ENCODE measurements at regions of chr14 and their contacts with region 1.

Region 1: GRCh38 chr14:76956316-76957090 is 72.0 kb downstream of the IRF2BPL start:
- DNase-seq: peak; percentile 92 to 99
- H3K4me3 ChIP-seq: peak overlapping the region; percentile 48; the same call in 1 of the 2 replicates
- H3K27ac ChIP-seq: peak overlapping the region; percentile 90
- H3K4me1 ChIP-seq: peaks cover 98% of the 10 kb centered on the region
- H3K27me3 ChIP-seq: no peaks in the 10 kb centered on the region
- CTCF ChIP-seq: no peak; the same call in 1 of the 2 replicates

Region 2: GRCh38 chr14:76109087-76109880 is 847.2 kb before region 1 on chr14:
- CTCF ChIA-PET with region 1: no interaction called
- POLR2A ChIA-PET with region 1: interaction called, 11 read pairs
- intact Hi-C with region 1: no loop called
- DNase-seq: peak; percentile 68 to 70
- H3K4me3 ChIP-seq: no peak overlapping the region
- H3K27ac ChIP-seq: no peak overlapping the region
- H3K4me1 ChIP-seq: no peaks in the 10 kb centered on the region
- H3K27me3 ChIP-seq: peaks cover 96% of the 10 kb centered on the region
- CTCF ChIP-seq: no peak

Region 3: GRCh38 chr14:76752744-76753143 is 203.8 kb before region 1 on chr14:
- CTCF ChIA-PET with region 1: no interaction called
- POLR2A ChIA-PET with region 1: no interaction called
- intact Hi-C with region 1: no loop called
- DNase-seq: no peak
- H3K4me3 ChIP-seq: no peak overlapping the region
- H3K27ac ChIP-seq: no peak overlapping the region
- H3K4me1 ChIP-seq: no peaks in the 10 kb centered on the region
- H3K27me3 ChIP-seq: peaks cover 74% of the 10 kb centered on the region
- CTCF ChIP-seq: no peak

Region 4: DNA sequence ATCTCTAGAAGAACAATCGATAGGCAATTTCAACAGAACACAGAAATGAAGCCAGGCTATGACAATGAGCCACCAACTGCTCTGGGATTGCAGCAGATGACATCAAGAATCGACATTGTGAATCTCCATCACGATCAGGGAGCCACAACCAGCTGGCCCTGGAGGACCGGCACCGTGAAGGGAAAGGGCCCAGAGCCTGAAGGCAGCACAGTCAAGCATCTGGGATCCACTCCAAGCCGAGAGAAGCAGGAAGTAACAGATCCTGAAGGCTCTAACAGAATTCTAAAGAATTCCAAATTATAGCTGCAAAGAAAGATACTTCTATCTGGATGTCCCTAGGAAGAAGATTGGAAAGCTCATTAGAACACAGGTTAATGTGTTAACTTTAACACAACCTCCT is 69.3 kb before region 1 on chr14:
- CTCF ChIA-PET with region 1: no interaction called
- POLR2A ChIA-PET with region 1: no interaction called
- intact Hi-C with region 1: no loop called
- DNase-seq: no peak
- H3K4me3 ChIP-seq: no peak overlapping the region
- H3K27ac ChIP-seq: no peak overlapping the region
- H3K4me1 ChIP-seq: no peaks in the 10 kb centered on the region
- H3K27me3 ChIP-seq: no peaks in the 10 kb centered on the region
- CTCF ChIP-seq: no peak

Region 5: DNA sequence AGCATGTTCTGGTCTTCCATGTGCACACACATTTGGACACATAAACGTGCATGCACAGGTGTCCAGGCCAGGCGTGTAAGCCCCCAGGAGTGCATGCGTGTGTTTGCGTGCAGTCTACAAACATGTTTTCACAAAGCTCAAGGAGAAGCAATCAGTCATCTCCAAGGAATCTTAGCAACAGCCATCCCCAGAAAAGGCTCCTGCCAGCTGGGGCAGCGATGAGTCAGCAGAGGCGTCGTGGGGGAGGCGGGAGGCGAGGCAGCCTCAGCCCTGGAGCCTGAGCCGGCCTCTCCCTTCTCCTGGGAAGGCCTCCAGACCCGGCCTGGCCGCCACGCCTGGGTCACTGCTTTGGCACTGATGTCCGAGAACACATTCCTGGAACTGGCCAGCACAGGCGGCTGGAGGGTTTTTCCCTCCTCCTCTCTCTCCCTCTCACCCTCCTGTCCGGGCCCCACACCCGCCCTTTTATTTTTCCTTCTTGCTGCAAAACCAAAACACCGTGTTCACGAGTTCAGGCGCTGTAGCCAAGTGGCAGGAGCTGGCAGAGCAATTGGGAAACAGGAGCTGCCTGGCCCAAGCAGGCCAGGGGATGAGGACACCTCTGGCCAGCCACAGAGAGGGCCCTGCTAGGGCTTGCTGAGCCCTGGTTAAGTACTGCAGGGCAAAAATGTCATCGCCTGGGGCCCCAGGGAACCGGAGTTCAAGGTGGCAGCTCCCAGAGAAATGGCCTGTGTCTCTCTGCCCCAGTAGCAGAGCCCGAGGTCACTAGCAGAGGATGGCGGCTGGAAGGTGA is 37.6 kb before region 1 on chr14:
- CTCF ChIA-PET with region 1: interaction called, 27 read pairs
- POLR2A ChIA-PET with region 1: interaction called, 29 read pairs
- intact Hi-C with region 1: loop called (anchors 1 kb)
- DNase-seq: peak; percentile 98 to 100
- H3K4me3 ChIP-seq: peak overlapping the region; percentile 20; the same call in 1 of the 2 replicates
- H3K27ac ChIP-seq: peak overlapping the region; percentile 91
- H3K4me1 ChIP-seq: peaks cover 79% of the 10 kb centered on the region
- H3K27me3 ChIP-seq: no peaks in the 10 kb centered on the region
- CTCF ChIP-seq: peak; percentile 43; the same call in 1 of the 2 replicates

Region 6: DNA sequence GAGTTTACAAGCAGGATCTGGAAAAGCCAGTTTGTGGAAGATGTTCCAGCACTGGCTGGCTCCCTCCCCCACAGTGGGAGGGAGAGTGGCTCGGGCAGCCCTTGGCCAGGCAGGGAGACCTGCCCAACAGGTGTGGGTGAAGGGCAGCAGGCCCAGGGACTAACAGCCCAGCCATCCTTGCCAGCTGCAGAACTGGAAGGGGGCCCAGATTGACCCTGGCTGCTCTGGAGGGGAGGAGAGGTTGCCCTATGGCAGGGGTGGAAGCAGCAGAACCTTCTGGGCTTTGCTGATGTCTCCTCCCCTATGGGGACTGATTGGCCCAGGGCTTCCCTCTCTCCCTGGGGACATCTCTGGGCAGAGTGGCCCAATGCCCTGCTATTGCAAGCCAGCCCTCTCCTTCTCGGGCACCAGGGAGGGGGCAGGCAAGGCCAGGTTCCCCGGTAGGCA is 51.5 kb after region 1 on chr14:
- CTCF ChIA-PET with region 1: interaction called, 6 read pairs
- POLR2A ChIA-PET with region 1: interaction called, 14 read pairs
- intact Hi-C with region 1: loop called (anchors 1 kb)
- DNase-seq: peak; percentile 95 to 99
- H3K4me3 ChIP-seq: peak overlapping the region; percentile 33; the same call in 1 of the 2 replicates
- H3K27ac ChIP-seq: peak overlapping the region; percentile 77
- H3K4me1 ChIP-seq: peaks cover 89% of the 10 kb centered on the region
- H3K27me3 ChIP-seq: no peaks in the 10 kb centered on the region
- CTCF ChIP-seq: no peak

Region 7: GRCh38 chr14:77028384-77029231 is 72.1 kb after region 1 on chr14 and contains the start of gene IRF2BPL:
- CTCF ChIA-PET with region 1: interaction called, 12 read pairs
- POLR2A ChIA-PET with region 1: interaction called, 17 read pairs
- intact Hi-C with region 1: loop called (anchors 1 kb)
- DNase-seq: peak; percentile 97 to 100
- H3K4me3 ChIP-seq: peak within 1 kb of the TSS; percentile 64
- H3K27ac ChIP-seq: peak within 1 kb of the TSS; percentile 88
- H3K4me1 ChIP-seq: peaks cover 54% of the 10 kb centered on the region
- H3K27me3 ChIP-seq: no peaks in the 10 kb centered on the region
- CTCF ChIP-seq: no peak
- total RNA-seq, gene IRF2BPL: 74.6 and 84.5 TPM in 2 replicates

Region 8: DNA sequence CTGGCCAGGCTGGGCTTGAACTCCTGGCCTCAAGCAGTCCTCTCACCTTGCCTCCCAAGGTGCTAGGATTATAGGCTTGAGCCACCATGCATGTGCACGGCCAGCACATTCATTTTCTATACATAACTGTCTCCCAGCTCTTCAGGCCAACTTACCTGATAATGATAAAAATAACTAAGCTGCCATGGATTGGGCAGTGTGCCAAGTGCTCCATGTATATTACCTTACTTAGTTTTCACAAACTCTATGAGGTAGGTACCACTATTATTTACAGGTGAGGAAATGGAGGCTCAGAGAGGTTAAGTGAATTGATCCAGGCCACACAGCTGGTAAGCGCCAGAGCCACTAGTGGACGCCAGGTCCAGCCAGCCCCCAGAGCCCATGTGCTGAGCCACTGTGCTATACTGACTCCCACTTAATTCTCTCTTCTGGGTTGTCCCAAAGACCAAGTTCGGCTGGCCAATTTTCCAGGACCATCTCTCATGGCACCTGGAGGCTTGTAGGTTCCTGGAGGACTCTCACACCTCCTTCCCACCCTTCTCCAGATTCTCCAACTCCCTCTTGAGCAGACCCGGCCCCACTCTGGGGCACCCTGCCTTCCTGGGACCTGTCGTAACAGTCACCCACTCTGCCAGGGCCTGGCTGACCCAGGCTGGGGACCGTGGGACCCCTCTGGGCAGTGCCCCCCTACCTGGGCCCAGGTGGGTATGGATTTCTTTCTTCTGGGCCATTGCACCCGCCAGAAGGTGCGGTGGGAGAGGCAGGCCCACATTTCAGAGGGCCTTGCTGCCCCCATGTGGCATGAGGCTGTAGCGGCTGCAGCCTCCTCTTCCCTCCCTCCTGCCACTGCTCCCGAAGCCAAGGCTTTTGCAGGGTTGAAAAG is 111.4 kb after region 1 on chr14:
- CTCF ChIA-PET with region 1: interaction called, 13 read pairs
- POLR2A ChIA-PET with region 1: interaction called, 6 read pairs
- intact Hi-C with region 1: loop called (anchors 1 kb)
- DNase-seq: peak; percentile 74 to 93
- H3K4me3 ChIP-seq: no peak overlapping the region
- H3K27ac ChIP-seq: no peak overlapping the region
- H3K4me1 ChIP-seq: peaks cover 54% of the 10 kb centered on the region
- H3K27me3 ChIP-seq: no peaks in the 10 kb centered on the region
- CTCF ChIP-seq: peak; percentile 100

Region 9: DNA sequence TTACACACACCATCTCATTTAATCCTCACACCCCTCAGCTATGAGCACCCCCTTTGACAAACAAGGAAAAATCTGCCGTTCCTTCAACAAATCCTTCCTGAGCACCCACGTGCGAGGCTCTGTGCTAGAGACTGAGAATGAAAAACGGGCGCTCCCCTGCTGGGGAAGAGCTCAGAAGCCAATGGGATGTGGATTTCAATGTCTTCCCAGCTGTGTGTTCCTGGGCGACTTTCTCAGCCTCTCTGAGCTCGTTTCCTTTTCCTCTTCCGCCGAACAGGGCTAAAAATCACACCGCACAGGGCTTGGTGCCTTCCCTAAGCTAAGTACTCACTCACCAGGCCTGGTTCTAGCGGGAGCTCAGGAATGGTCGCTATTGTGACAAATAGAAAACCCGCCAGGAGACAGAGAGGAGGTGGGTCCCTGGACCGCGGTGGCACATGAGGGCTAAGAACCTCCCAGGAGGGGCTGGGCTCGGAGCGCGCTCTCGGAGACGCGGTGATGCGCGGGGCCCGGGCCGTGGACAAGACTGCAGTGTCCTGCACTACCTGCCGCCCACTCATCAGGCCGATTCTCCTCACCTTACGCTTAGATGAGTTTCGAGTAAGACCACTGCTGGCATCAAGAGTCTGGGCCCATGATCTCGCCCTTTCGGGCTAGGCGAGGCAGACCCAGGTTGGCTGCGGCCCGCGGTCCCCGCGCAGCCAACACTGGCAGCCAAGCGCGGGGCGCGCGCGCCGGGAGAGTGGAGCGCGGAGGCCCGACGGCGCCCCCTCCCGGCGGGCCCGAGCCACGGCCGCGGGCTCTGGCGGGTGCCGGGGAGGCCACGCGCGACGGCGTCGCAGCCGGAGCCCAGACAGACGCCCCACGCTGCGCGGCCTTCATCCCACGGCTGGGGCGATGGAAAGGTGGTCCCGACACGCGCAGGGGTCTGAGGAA is 168.1 kb after region 1 on chr14:
- CTCF ChIA-PET with region 1: no interaction called
- POLR2A ChIA-PET with region 1: interaction called, 8 read pairs
- intact Hi-C with region 1: loop called (anchors 1 kb)
- DNase-seq: peak in 1 of 2 experiments; percentile 81
- H3K4me3 ChIP-seq: peak overlapping the region; percentile 31; the same call in 1 of the 2 replicates
- H3K27ac ChIP-seq: no peak overlapping the region
- H3K4me1 ChIP-seq: peaks cover 26% of the 10 kb centered on the region
- H3K27me3 ChIP-seq: peaks cover 51% of the 10 kb centered on the region
- CTCF ChIP-seq: peak; percentile 28; the same call in 1 of the 2 replicates

Region 10: GRCh38 chr14:77158175-77158891 is 201.8 kb after region 1 on chr14:
- CTCF ChIA-PET with region 1: no interaction called
- POLR2A ChIA-PET with region 1: no interaction called
- intact Hi-C with region 1: no loop called
- DNase-seq: peak in 1 of 2 experiments; percentile 69
- H3K4me3 ChIP-seq: no peak overlapping the region
- H3K27ac ChIP-seq: no peak overlapping the region
- H3K4me1 ChIP-seq: no peaks in the 10 kb centered on the region
- H3K27me3 ChIP-seq: peaks cover 73% of the 10 kb centered on the region
- CTCF ChIP-seq: no peak

Measured in PC-9 (cell line).